Ovary (tissue), 10 donors: ENCODE measurements at regions of chr7 and their contacts with region 1.

Region 1: GRCh38 chr7:17528636-17529035 is 230.2 kb downstream of the AHR start:
- DNase-seq: no peak
- H3K4me3 ChIP-seq: no peak overlapping the region
- H3K27ac ChIP-seq: no peak overlapping the region
- H3K4me1 ChIP-seq: peaks cover 3% of the 10 kb centered on the region
- H3K27me3 ChIP-seq: no peaks in the 10 kb centered on the region
- CTCF ChIP-seq: no peak
- EP300 ChIP-seq: no peak
- POLR2A ChIP-seq: no peak

Region 2: GRCh38 chr7:17144322-17144721 is 384.3 kb before region 1 on chr7:
- intact Hi-C with region 1: no loop called
- DNase-seq: no peak
- H3K4me3 ChIP-seq: no peak overlapping the region
- H3K27ac ChIP-seq: no peak overlapping the region
- H3K4me1 ChIP-seq: peaks cover 2% of the 10 kb centered on the region
- H3K27me3 ChIP-seq: no peaks in the 10 kb centered on the region
- CTCF ChIP-seq: no peak
- EP300 ChIP-seq: no peak
- POLR2A ChIP-seq: no peak

Region 3: GRCh38 chr7:17516771-17517170 is 11.9 kb before region 1 on chr7:
- intact Hi-C with region 1: loop called in 1 of 4 experiments (anchors 2 kb)
- DNase-seq: no peak
- H3K4me3 ChIP-seq: no peak overlapping the region
- H3K27ac ChIP-seq: no peak overlapping the region
- H3K4me1 ChIP-seq: no peaks in the 10 kb centered on the region
- H3K27me3 ChIP-seq: no peaks in the 10 kb centered on the region
- CTCF ChIP-seq: no peak
- EP300 ChIP-seq: no peak
- POLR2A ChIP-seq: no peak

Region 4: DNA sequence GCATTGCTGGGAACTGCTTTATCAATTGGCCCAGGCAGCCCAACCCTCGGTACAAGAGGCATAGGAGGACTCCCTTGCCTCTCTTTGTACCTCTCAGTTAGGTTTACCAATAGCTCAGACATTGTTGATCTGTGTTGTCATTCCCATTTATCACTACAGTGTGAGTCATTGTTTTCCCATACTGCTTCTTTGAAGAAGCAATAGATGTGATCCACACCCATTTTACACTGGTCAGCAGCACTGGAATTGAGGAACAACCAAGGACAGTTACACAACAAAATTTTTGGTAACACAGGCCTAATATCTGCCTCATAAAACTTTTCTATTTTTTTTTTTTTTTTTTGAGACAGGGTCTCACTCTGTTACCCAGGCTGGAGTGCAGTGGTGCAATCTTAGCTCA is 104.5 kb after region 1 on chr7:
- intact Hi-C with region 1: no loop called
- DNase-seq: no peak
- H3K4me3 ChIP-seq: no peak overlapping the region
- H3K27ac ChIP-seq: no peak overlapping the region
- H3K4me1 ChIP-seq: no peaks in the 10 kb centered on the region
- H3K27me3 ChIP-seq: no peaks in the 10 kb centered on the region
- CTCF ChIP-seq: no peak
- EP300 ChIP-seq: no peak
- POLR2A ChIP-seq: no peak

Region 5: GRCh38 chr7:17844514-17845196 is 316.0 kb after region 1 on chr7:
- intact Hi-C with region 1: no loop called
- DNase-seq: no peak
- H3K4me3 ChIP-seq: no peak overlapping the region
- H3K27ac ChIP-seq: no peak overlapping the region
- H3K4me1 ChIP-seq: no peaks in the 10 kb centered on the region
- H3K27me3 ChIP-seq: no peaks in the 10 kb centered on the region
- CTCF ChIP-seq: no peak
- EP300 ChIP-seq: no peak
- POLR2A ChIP-seq: no peak

Region 6: GRCh38 chr7:17871815-17872533 is 343.3 kb after region 1 on chr7:
- intact Hi-C with region 1: no loop called
- DNase-seq: no peak
- H3K4me3 ChIP-seq: no peak overlapping the region
- H3K27ac ChIP-seq: no peak overlapping the region
- H3K4me1 ChIP-seq: no peaks in the 10 kb centered on the region
- H3K27me3 ChIP-seq: no peaks in the 10 kb centered on the region
- CTCF ChIP-seq: no peak
- EP300 ChIP-seq: no peak
- POLR2A ChIP-seq: no peak